PC-9 (cell line): ENCODE measurements at regions of chr12 and their contacts with region 1.

Region 1: DNA sequence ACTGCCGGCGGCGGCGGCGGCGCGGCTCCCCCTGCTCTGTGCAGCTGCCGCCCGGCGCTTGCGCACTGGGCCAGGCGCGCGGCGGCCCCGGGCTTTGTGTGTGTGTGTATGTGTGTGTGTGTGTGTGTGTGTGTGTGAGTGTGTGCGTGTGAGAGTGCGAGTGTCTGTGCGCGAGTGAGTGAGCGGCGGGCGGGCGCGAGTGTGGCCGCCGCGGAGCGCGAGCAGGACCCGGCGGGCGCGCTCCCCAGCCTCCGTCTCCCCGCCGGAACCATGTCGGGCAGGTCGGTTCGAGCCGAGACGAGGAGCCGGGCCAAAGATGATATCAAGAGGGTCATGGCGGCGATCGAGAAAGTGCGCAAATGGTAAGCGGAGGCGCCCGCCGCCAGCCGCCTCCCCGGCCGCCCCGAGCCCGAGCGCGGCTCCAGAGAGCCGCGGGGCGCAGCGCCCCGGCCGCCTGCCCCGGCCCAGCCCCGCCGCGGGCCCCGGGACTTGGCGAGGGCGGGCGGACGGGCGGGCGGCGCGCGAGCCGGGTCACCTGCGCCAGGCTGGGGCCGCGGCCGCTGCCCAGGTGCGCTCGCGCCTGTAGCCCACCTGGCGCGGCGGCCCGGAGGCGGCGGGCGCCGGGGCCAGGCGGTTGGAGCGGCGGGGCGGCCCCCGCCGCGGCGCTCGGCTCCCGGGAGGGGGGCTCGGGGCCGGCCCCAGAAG is at the start of gene BCL7A:
- DNase-seq: peak in 1 of 2 experiments; percentile 60
- H3K4me3 ChIP-seq: peak within 1 kb of the TSS; percentile 76
- H3K27ac ChIP-seq: no peak within 1 kb of the TSS
- H3K4me1 ChIP-seq: no peaks in the 10 kb centered on the region; the same call in 1 of the 2 replicates
- H3K27me3 ChIP-seq: no peaks in the 10 kb centered on the region
- CTCF ChIP-seq: no peak
- total RNA-seq, gene BCL7A: 6.3 and 6.6 TPM in 2 replicates

Region 2: DNA sequence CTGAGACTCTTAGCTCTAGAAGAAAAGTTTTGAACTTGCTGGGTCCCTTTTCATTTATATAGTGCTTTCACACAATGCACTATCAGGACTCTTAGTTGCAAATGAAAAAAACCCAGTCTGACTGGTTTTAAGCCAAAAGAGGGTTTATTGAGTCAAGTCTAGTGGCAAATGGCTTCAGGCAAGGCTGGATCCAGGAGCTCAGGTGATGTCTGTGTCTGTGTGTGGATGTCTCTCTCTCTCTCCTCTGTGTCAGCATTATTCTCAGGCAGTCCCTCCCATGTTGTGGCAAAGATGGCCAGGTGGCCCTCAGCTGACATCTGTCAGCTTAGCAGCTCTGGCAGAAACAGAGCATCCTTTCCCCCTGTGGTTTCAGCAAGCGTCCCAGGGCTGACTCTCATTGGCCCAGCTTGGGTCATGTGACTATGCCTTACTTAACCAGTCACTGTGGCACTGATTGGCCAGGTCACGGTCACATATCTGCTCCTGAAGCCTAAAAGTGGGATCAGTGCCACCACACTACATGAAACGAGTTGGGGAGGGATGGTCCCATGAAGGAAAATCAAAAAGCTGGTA is 303.2 kb before region 1 on chr12:
- CTCF ChIA-PET with region 1: no interaction called
- POLR2A ChIA-PET with region 1: interaction called, 16 read pairs
- intact Hi-C with region 1: no loop called
- DNase-seq: no peak
- H3K4me3 ChIP-seq: no peak overlapping the region
- H3K27ac ChIP-seq: no peak overlapping the region
- H3K4me1 ChIP-seq: peaks cover 23% of the 10 kb centered on the region
- H3K27me3 ChIP-seq: no peaks in the 10 kb centered on the region
- CTCF ChIP-seq: no peak

Region 3: DNA sequence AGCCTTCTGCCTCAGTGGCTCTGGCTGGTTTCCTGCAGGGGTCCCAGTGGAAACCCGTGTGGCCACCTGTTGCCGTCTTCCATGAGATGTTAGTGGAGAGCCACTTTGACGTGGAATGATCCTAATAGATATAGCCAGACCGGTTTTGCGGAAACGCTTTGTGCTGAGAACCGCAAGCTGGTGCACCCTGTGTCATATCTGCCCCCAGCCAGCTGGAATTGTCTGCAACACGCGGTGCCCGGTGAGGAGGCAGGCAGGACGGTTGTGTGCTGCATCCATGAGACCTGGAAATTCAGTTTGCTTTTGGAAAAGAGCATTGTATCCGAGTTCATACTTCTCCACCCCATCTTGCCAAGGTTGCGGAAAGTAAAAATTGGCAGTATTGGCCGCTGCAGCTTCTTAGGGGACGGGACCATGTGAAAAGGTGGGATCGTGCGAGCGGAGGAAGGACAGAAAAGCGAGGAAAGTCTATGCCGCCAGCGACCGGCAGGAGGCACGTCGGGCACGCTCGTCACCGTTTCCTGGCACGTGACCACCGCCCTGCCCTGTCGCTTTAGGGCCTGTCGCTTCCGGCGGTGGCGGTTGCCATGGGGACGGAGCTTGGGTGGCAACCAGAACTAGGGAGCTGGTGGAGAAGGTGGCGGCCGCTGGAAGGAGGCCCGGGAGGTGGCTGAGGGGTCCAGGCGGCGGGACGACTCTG is 103.8 kb before region 1 on chr12 and contains the start of gene CFAP251:
- CTCF ChIA-PET with region 1: no interaction called
- POLR2A ChIA-PET with region 1: no interaction called
- intact Hi-C with region 1: no loop called
- DNase-seq: peak in 1 of 2 experiments; percentile 77
- H3K4me3 ChIP-seq: no peak within 1 kb of the TSS
- H3K27ac ChIP-seq: no peak within 1 kb of the TSS
- H3K4me1 ChIP-seq: no peaks in the 10 kb centered on the region
- H3K27me3 ChIP-seq: no peaks in the 10 kb centered on the region
- CTCF ChIP-seq: no peak
- total RNA-seq, gene CFAP251: 3.7 and 4.3 TPM in 2 replicates

Region 4: GRCh38 chr12:122040579-122041386 is 18.8 kb after region 1 on chr12:
- CTCF ChIA-PET with region 1: no interaction called
- POLR2A ChIA-PET with region 1: no interaction called
- intact Hi-C with region 1: no loop called
- DNase-seq: no peak
- H3K4me3 ChIP-seq: no peak overlapping the region
- H3K27ac ChIP-seq: no peak overlapping the region
- H3K4me1 ChIP-seq: peaks cover 5% of the 10 kb centered on the region
- H3K27me3 ChIP-seq: no peaks in the 10 kb centered on the region
- CTCF ChIP-seq: no peak